Pancreas (tissue), 10 donors: ENCODE measurements at regions of chr20 and their contacts with region 1.

Region 1: GRCh38 chr20:43537921-43538877 is 20.6 kb upstream of the SGK2 start:
- DNase-seq: peak; percentile 47 to 87 (median 74)
- ATAC-seq: peak; percentile 81 to 89 (median 84)
- H3K4me3 ChIP-seq: no peak overlapping the region
- H3K27ac ChIP-seq: no peak overlapping the region
- H3K4me1 ChIP-seq: peaks cover 0 to 16% (median 6%) of the 10 kb centered on the region in 3 donors
- H3K27me3 ChIP-seq: no peaks in the 10 kb centered on the region
- CTCF ChIP-seq: peak; percentile 80 to 94 (median 91)

Region 2: GRCh38 chr20:42996141-42996540 is 542.1 kb before region 1 on chr20:
- intact Hi-C with region 1: no loop called
- DNase-seq: no peak
- ATAC-seq: no peak
- H3K4me3 ChIP-seq: no peak overlapping the region
- H3K27ac ChIP-seq: no peak overlapping the region
- H3K4me1 ChIP-seq: no peaks in the 10 kb centered on the region
- H3K27me3 ChIP-seq: no peaks in the 10 kb centered on the region
- CTCF ChIP-seq: no peak

Region 3: GRCh38 chr20:43424394-43424793 is 113.8 kb before region 1 on chr20:
- intact Hi-C with region 1: no loop called
- DNase-seq: no peak
- ATAC-seq: no peak
- H3K4me3 ChIP-seq: no peak overlapping the region
- H3K27ac ChIP-seq: no peak overlapping the region
- H3K4me1 ChIP-seq: no peaks in the 10 kb centered on the region
- H3K27me3 ChIP-seq: peaks cover 0 to 3% (median 0%) of the 10 kb centered on the region in 4 donors
- CTCF ChIP-seq: no peak

Region 4: DNA sequence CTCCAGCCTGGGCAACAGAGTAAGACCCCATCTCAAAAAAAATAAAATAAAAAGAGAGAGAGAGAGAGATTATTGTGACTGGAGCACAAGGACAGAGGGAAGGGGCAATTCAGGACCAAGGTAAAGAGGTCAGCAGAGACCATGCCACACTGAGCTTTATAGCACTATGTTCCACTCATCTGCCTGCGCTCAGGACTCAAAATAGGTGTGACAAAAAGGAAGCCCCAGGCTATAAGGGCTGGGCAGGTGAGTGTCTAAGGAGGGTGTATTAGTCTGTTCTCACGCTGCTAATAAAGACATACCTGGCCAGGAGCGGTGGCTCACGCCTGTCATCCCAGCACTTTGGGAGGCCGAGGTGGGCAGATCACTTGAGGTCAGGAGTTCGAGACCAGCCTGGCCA is 103.6 kb before region 1 on chr20:
- intact Hi-C with region 1: no loop called
- DNase-seq: no peak
- ATAC-seq: no peak
- H3K4me3 ChIP-seq: no peak overlapping the region
- H3K27ac ChIP-seq: no peak overlapping the region
- H3K4me1 ChIP-seq: no peaks in the 10 kb centered on the region
- H3K27me3 ChIP-seq: no peaks in the 10 kb centered on the region
- CTCF ChIP-seq: no peak

Region 5: DNA sequence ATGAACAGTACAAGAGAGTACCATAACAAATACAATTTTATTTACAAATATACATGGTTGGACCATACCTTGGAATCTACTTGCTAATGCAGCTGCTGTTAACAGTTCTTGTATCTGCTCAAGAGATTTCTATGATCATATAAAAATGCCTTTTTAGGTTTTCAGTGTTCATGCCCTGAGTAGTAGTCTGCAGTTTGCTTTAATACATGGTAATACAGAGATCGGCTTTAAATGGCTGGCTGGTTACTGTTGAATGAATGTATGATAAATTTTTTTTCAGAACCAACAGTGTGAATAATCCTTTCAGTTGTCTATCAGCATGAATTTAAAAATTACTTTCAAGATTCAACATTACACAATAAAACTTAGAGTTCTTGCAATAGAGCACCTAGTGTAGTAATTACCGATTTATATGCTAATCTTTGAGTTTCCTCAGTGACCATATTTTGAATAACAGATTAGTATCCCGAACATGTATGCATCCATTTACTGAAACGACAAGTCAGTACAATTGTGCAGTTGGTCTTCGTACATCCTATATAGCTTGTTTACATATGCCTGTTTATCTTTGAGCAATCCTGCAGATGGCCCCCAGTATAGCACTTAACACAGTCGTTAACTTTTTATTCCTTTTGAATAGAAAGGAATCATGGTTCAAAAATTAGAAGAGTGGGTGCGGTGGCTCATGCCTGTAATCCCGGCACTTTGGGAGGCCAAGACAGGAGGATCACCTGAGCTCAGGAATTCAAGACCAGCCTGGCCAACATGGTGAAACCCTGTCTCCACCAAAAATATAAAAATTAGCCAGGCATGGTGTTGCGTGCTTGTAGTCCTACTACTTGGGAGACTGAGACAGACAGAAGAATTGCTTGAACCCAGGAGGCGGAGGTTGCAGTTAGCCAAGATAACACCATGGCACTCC is 74.1 kb before region 1 on chr20:
- intact Hi-C with region 1: no loop called
- DNase-seq: no peak
- ATAC-seq: no peak
- H3K4me3 ChIP-seq: no peak overlapping the region
- H3K27ac ChIP-seq: no peak overlapping the region
- H3K4me1 ChIP-seq: peaks cover 5 to 31% (median 9%) of the 10 kb centered on the region in 3 donors
- H3K27me3 ChIP-seq: no peaks in the 10 kb centered on the region
- CTCF ChIP-seq: no peak

Region 6: DNA sequence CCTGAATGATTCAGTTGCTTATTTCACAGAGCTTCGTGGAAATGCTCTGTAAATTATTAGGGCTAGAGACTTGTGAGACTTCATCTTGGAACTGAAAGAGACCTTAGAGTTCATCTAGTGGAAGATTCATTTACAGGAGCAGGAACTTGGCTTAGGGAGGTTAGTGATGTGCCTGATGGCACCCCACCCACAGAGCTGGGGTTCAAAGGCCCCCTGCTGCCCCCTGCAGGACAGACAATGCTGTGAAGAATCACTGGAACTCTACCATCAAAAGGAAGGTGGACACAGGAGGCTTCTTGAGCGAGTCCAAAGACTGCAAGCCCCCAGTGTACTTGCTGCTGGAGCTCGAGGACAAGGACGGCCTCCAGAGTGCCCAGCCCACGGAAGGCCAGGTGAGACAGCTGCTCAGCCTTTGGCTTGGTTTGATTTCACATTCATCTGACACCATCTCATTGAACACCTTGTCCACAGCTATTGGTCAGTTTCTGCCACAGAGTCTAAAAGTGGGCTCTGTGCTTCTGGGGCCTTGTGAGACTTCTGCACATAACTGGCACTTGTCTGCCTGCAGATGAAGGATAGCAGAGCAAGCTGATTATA is 153.8 kb after region 1 on chr20:
- intact Hi-C with region 1: loop called in 1 of 3 experiments (anchors 5 kb)
- DNase-seq: peak in 4 of 6 donors; percentile 16 to 81 (median 40)
- ATAC-seq: peak; percentile 46 to 90 (median 72)
- H3K4me3 ChIP-seq: no peak overlapping the region
- H3K27ac ChIP-seq: no peak overlapping the region
- H3K4me1 ChIP-seq: no peaks in the 10 kb centered on the region
- H3K27me3 ChIP-seq: no peaks in the 10 kb centered on the region
- CTCF ChIP-seq: peak in 2 of 4 donors; percentile 34 to 42